ENCODE measurements at regions of chr1 and their contacts with region 1.

Region 1: GRCh38 chr1:167752219-167752985 is 30.6 kb downstream of the MPZL1 start:
- DNase-seq: no peak
- H3K4me3 Mint-ChIP-seq: peak overlapping the region; percentile 2
- H3K27ac Mint-ChIP-seq: peak overlapping the region; percentile 53
- H3K4me1 Mint-ChIP-seq: peaks cover 42% of the 10 kb centered on the region
- H3K27me3 Mint-ChIP-seq: no peaks in the 10 kb centered on the region
- CTCF ChIP-seq: no peak

Region 2: GRCh38 chr1:167739752-167740151 is 12.7 kb before region 1 on chr1:
- CTCF ChIA-PET with region 1: interaction called, 10 read pairs
- intact Hi-C with region 1: no loop called
- DNase-seq: no peak
- H3K4me3 Mint-ChIP-seq: peak overlapping the region; percentile 2
- H3K27ac Mint-ChIP-seq: peak overlapping the region; percentile 12
- H3K4me1 Mint-ChIP-seq: peaks cover 37% of the 10 kb centered on the region
- H3K27me3 Mint-ChIP-seq: no peaks in the 10 kb centered on the region
- CTCF ChIP-seq: no peak

Region 3: DNA sequence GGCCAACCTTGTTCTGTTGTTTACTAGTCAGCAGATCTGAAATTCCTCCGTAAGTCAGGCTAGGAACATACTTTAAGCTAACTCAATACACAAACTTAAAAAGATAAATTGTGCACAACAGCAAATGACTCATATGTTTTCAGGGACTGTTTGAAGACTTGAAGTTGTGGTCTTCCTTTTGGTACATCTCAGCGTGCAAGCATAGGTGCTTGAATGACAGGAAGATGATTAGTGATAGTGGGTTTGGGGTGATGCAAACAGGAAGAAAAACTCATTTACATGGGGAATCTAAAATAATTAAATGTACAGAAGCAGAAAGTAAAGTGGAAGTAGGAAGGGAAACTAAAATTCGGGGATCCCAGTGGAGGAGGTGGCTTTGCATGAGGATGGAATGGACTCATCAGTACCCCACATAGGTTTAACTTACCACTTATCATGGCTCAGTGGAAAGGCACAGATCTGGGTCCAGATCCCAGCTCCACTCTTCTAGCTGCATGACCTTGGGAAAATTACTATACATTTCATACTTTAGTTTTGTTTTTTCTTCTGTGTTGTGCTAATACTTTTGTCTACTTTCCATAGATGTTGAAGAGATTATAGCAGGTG is 669.1 kb after region 1 on chr1:
- CTCF ChIA-PET with region 1: no interaction called
- intact Hi-C with region 1: no loop called
- DNase-seq: no peak
- H3K4me3 Mint-ChIP-seq: no peak overlapping the region
- H3K27ac Mint-ChIP-seq: no peak overlapping the region
- H3K4me1 Mint-ChIP-seq: no peaks in the 10 kb centered on the region
- H3K27me3 Mint-ChIP-seq: no peaks in the 10 kb centered on the region
- CTCF ChIP-seq: no peak

Region 4: GRCh38 chr1:168520052-168520751 is 767.8 kb after region 1 on chr1:
- CTCF ChIA-PET with region 1: no interaction called
- intact Hi-C with region 1: no loop called
- DNase-seq: no peak
- H3K4me3 Mint-ChIP-seq: no peak overlapping the region
- H3K27ac Mint-ChIP-seq: no peak overlapping the region
- H3K4me1 Mint-ChIP-seq: peaks cover 10% of the 10 kb centered on the region
- H3K27me3 Mint-ChIP-seq: no peaks in the 10 kb centered on the region
- CTCF ChIP-seq: no peak

Region 5: DNA sequence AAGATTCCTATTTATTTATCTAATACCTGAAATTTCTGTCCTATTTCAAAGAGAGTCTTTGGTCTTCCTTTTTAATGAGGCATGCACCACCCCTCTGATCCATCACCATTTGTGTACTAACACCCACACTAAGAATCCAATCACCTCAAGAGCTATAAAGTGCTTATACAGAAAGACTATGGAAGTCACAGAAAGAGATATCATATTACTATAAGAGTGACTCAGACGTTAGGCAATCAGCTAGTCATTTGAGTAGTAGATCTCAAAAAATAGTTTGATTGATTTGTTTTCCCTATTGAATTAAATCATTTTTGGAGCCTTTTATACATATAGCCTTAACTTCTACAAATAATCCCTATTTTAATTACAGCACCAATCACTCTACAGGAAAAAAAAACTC is 1569.2 kb after region 1 on chr1:
- CTCF ChIA-PET with region 1: no interaction called
- intact Hi-C with region 1: no loop called
- DNase-seq: no peak
- H3K4me3 Mint-ChIP-seq: no peak overlapping the region
- H3K27ac Mint-ChIP-seq: peak overlapping the region; percentile 54
- H3K4me1 Mint-ChIP-seq: peaks cover 30% of the 10 kb centered on the region
- H3K27me3 Mint-ChIP-seq: no peaks in the 10 kb centered on the region
- CTCF ChIP-seq: no peak